Activated T-helper 2 cell treated with anti-CD3 and anti-CD28 coated beads, Interferon-gamma antibody, Interleukin-2, Interleukin-4, amounts not matched to agents 10 μg/mL and 5 μg/mL and 100 μg/mL, durations not matched to agents 14 hours and 24 hours and 36 hours (primary cell): ENCODE measurements at regions of chr3 and their contacts with region 1.

Region 1: DNA sequence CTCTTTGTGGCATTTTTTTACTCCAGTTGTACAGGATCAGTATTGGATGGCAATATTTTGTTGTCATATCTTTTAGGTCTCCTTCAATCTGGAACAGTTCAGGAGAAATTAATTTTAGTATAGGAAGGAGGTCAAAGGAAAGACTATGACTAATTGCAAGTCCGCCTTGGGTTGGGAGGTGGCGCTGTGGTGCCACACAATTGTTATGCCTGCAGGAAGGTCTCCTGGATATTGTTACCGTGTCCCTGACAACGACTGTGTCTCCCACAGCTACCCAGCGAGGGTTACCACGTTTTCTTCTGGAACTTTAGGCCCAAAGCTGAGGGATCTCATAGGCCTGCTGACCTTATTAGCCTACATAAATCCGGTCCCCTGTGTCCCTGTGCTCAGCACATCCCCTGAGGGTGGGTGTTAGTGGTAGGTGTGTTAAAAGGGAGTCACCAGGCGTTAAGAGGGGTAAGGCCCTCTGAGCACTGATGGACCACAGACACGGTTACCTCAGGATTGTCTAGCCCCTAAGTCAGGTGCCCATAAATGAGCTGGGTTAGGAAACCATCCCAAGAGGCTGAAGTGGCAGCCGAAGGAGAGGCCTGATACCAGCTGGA is 31.5 kb downstream of the KCNAB1 start:
- DNase-seq: peak; percentile 18
- H3K4me3 Mint-ChIP-seq: no peak overlapping the region
- H3K27ac Mint-ChIP-seq: no peak overlapping the region
- H3K4me1 Mint-ChIP-seq: peaks cover 4% of the 10 kb centered on the region
- H3K27me3 Mint-ChIP-seq: peaks cover 22% of the 10 kb centered on the region

Region 2: DNA sequence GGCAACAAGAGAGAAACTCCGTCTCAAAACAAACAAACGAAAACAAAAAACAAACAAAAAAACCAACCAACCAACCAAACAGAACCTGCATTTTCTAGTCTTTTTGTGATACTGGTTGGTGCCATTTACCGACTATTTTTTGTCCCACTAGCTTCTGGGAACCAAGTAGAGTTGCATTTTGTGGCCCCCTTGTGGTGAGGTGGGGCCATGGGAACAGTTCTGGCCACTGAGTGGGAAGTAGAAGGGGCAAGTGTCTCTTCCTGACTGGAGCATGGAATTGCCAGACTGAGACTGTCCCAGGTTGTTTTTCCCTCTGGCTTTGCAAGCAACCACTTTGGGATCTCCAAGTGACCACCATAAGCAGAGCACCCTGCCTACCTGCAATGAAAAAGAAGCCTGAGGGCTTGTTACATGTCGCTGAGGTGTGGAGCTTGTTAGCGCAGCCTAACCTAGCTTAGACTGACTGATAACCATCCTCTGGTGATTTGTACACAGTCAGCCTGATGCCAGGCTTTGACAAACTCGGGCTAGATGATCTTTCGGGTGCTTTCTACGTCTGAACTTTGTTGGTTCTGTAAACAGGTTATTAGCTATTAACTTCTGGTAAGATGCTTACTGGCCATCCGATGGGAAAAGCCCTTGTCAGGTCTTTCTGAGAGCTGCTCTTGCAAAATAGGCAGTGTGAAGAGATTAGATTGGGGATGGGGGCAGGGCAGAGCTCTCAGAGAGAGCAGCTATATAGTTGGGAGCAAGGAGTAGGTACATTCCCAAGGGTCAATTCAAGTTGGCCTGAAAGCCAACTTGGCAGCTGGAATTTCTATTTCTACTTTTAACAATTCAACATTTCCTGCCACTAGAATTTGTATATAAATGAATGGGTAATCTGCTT is 230.8 kb after region 1 on chr3:
- intact Hi-C with region 1: loop called (anchors 2 kb)
- DNase-seq: no peak
- H3K4me3 Mint-ChIP-seq: no peak overlapping the region
- H3K27ac Mint-ChIP-seq: no peak overlapping the region
- H3K4me1 Mint-ChIP-seq: no peaks in the 10 kb centered on the region
- H3K27me3 Mint-ChIP-seq: peaks cover 25% of the 10 kb centered on the region

Region 3: DNA sequence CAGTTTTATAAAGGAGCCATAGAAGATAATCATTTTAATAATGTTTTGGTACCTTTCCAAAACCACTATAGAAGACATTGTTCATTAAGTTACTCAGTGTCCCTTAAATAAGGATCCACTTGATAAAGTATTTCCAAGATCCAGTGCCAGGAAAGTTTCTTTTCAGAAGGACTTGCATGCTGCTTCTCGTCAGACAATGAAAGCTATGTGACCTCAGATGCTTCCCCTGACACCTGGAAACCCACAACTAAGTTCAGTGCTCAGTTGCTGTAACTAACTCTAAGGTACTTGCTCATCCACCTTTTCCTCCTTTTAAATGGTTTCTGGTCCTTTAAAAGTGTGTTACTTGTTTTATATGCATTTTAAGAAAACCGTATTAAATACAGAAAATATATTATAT is 395.7 kb after region 1 on chr3:
- intact Hi-C with region 1: loop called (anchors 10 kb)
- DNase-seq: no peak
- H3K4me3 Mint-ChIP-seq: no peak overlapping the region
- H3K27ac Mint-ChIP-seq: no peak overlapping the region
- H3K4me1 Mint-ChIP-seq: peaks cover 42% of the 10 kb centered on the region
- H3K27me3 Mint-ChIP-seq: no peaks in the 10 kb centered on the region

Region 4: DNA sequence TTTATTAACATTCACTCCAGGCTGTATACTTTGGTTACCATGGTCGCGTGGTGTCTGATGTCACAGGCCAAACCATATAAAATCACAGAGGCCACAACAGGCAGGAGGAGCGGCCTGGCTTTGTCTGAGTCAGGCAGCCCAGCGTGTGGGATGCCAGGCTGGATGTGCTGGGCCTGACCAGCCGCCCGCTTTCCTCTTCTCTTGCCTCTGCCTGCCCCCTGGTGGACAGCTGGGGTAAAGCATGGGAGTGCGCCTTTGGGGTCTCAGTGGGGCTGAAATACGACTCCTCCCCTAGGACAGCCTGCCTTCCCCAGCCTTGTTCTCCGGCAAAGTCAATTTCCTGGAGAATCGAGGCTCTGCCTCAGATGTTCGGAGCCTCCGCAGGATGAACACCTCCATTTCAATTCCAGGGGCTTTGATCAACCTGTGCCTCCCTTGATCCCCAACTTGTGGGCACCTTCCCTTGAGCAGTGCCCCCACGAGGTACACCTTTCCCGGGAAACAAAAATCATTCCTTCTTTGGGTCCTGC is 929.8 kb after region 1 on chr3:
- intact Hi-C with region 1: loop called (anchors 5 kb)
- DNase-seq: peak; percentile 73
- H3K4me3 Mint-ChIP-seq: no peak overlapping the region
- H3K27ac Mint-ChIP-seq: peak overlapping the region; percentile 47
- H3K4me1 Mint-ChIP-seq: peaks cover 47% of the 10 kb centered on the region
- H3K27me3 Mint-ChIP-seq: no peaks in the 10 kb centered on the region

Region 5: DNA sequence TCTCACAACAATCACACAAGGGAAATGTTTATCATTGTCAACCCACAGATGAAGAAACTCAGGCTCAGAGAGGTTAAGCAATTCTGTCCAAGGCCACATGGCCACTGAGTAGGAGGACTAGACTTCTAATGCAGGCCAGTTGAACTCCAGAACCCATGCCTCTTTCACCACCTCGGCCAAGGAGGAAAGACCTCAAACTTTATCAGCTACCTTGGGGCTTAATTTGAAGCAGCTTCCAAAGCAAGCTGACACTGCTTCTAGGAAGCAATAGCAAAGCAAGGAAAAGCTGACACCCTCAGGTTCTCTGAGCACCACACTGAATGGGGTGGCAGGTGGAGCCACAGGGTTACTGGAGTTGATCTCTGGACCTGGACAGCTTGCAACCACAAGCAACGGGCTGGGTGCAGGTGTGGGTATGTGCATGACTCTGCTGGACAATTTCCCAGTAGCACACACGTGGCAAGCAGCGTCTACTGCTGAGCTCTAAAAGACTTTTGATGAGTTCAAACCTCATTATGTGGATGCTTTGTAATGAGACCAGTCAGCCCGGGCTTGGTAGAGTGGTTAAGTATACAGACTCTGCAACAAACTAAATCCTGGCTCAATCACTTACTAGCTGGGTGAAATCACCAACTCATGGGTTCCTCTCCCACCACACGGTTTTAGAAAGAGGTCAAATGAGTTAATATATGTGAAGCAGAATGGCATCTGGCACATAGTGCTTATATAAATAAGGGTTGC is 984.9 kb after region 1 on chr3:
- intact Hi-C with region 1: loop called (anchors 2 kb)
- DNase-seq: no peak
- H3K4me3 Mint-ChIP-seq: no peak overlapping the region
- H3K27ac Mint-ChIP-seq: peak overlapping the region; percentile 24
- H3K4me1 Mint-ChIP-seq: peaks cover 54% of the 10 kb centered on the region
- H3K27me3 Mint-ChIP-seq: no peaks in the 10 kb centered on the region